Posterior vena cava (tissue), 2 donors: ENCODE measurements at regions of chr1 and their contacts with region 1.

Region 1: GRCh38 chr1:116418091-116418830 is 45.2 kb downstream of the ATP1A1 start:
- DNase-seq: peak; percentile 93

Region 2: GRCh38 chr1:116377541-116378529 is 40.4 kb before region 1 on chr1:
- intact Hi-C with region 1: loop called in 1 of 2 experiments (anchors 5 kb)
- DNase-seq: peak; percentile 90

Region 3: DNA sequence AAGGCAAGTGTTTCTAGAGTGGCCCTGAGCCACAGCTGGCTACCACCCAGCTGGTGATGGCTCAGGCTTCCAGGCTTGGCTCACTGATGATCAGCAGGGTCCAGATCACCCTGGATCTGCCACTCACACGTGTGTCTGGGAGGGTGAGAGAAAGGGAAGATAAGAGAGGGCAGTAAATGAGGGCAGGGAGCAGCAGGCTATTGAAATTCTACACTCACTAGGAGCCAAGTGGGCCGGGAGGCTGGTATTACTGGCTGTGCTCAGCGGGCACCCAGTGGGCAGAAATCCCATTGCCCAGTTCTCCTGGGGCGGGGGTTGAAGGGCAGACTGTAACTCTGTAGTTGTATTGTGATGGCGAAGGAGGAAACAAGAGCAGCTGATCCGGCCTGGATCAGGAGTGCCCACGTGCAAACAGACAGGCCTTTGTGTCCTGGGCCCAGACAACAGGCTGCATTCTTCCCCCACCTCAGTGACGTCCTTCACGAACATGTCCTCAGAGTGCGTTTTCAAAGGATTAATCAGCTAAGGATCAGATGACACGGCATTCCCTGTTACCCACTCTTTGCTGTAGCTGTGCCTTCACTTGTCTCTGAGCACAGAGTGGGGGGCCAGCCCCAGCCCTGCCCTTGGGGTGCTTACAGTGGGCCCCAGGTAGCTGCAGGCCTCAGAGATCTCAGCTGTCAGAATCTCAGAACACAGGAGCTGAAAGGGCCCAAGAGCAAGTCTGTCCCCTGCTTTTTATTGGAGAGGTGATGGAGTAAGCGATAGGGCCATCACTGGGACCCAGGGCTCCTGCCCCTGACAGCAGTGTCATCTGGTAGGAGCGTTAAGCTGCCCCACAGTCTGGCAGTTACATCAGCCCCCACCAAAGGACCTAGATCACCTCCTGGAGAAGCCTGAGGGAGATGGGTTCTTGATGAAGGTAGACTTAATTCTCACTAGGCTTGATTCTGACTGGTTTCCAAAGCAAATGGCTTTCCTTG is 15.3 kb after region 1 on chr1:
- intact Hi-C with region 1: no loop called
- DNase-seq: no peak